ENCODE measurements at regions of chr3 and their contacts with region 1.

Region 1: DNA sequence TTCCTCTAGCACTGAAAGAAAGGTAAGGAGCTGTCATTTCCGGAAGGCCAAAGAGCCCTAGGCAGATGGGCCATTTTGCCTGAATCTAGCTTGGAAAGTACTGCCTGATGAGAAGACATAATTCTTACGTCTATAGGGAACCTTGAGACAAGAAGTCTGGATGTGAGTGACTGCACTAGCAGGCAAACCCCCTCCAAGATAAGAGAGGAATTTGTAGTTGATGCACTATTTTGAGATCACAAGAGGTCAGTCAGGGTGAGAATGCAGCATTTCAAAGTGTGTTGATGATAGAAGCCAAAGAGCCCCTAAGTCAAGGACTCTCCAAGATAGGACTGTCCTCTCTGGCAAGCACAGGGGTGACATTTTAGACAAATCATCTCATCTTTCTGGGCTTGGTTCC is 99.2 kb downstream of the HES1 start:
- DNase-seq: no peak
- H3K4me3 ChIP-seq: no peak overlapping the region
- H3K27ac ChIP-seq: no peak overlapping the region
- H3K27me3 ChIP-seq: peaks cover 12% of the 10 kb centered on the region
- CTCF ChIP-seq: no peak

Region 2: GRCh38 chr3:194121891-194122631 is 113.1 kb before region 1 on chr3:
- CTCF ChIA-PET with region 1: interaction called, 10 read pairs
- POLR2A ChIA-PET with region 1: no interaction called
- DNase-seq: no peak
- H3K4me3 ChIP-seq: no peak overlapping the region
- H3K27ac ChIP-seq: no peak overlapping the region
- H3K27me3 ChIP-seq: peaks cover 27% of the 10 kb centered on the region
- CTCF ChIP-seq: no peak

Measured in AG04450 (cell line).